OCI-LY7 (cell line): ENCODE measurements at regions of chr6 and their contacts with region 1.

Region 1: DNA sequence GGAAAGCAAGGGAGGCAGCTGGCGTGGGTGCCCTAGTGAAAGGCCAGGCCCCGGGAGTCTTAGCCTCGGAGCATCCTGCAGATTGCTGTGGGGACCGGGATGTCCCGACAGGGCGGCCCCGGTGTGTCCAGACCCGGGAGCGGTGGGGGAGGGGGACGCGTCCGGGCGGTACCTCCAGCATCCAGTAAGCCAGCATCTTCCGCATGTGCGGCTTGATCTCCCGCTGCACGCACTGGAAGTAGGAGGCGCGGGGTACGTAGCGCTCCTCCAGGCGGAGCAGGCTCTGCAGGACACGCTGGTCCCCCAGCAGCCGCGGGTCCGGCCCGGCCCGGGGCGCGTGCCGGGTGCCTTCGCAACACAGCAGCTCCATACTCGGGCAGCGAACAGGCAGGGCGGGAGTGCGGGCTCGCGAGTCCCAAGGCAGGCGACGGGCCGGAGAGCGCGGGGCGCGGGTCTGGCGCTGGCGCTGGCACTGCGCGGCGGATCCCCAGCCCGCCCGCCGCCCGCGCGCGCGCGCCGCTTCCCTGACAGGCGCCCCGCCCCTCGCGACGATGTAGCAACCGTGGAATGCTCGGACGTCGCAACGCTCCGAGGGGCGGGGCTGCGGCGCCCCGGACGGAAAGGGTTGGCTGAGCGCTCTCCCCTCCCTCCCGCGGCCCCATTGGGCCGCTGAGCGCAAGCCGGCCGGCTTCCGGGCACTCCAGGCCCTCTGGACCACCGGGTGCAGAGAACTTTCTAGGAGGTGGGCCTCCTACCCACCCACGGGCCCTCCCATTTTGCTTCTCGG is at the start of gene CCND3:
- DNase-seq: peak; percentile 95
- H3K4me3 ChIP-seq: peak within 1 kb of the TSS; percentile 93
- H3K27ac ChIP-seq: peak within 1 kb of the TSS; percentile 82
- H3K4me1 ChIP-seq: peaks cover 69% of the 10 kb centered on the region
- CTCF ChIP-seq: no peak
- total RNA-seq, gene CCND3: 229 and 319 TPM in 2 replicates

Region 2: DNA sequence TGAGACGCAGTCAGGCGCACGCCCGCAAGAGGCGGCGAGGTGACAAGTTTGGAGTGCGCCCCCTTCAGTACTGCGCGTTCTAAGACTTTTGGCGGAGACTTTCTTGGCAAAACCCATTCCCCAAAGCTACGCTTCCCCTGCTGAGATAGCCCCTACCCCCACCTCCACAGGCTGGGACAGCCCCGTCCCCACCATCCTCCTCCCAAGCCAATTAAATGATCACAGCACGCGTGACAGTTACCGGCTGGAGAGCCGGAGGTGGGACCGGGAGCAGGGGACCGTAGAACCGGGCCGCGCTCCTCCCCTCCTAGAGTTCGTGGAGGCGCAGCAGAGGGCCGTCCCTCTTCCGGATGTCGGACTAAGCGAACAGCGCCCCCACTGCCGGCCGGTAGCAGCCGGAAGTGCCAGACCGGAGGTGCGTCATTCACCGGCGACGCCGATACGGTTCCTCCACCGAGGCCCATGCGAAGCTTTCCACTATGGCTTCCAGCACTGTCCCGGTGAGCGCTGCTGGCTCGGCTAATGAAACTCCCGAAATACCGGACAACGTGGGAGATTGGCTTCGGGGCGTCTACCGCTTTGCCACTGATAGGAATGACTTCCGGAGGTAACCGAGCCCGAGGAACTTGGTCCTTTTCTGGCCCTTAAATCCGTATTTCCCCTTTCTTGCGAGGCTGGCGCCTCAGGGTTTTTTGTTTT is 154.1 kb before region 1 on chr6 and contains the start of gene TOMM6:
- CTCF ChIA-PET with region 1: interaction called, 3 read pairs
- POLR2A ChIA-PET with region 1: interaction called, 3 read pairs
- intact Hi-C with region 1: loop called (anchors 2 kb)
- DNase-seq: peak; percentile 97
- H3K4me3 ChIP-seq: peak within 1 kb of the TSS; percentile 86
- H3K27ac ChIP-seq: peak within 1 kb of the TSS; percentile 81
- H3K4me1 ChIP-seq: peaks cover 39% of the 10 kb centered on the region
- CTCF ChIP-seq: peak; percentile 81
- total RNA-seq, gene TOMM6: 84.9 and 131 TPM in 2 replicates

Region 3: DNA sequence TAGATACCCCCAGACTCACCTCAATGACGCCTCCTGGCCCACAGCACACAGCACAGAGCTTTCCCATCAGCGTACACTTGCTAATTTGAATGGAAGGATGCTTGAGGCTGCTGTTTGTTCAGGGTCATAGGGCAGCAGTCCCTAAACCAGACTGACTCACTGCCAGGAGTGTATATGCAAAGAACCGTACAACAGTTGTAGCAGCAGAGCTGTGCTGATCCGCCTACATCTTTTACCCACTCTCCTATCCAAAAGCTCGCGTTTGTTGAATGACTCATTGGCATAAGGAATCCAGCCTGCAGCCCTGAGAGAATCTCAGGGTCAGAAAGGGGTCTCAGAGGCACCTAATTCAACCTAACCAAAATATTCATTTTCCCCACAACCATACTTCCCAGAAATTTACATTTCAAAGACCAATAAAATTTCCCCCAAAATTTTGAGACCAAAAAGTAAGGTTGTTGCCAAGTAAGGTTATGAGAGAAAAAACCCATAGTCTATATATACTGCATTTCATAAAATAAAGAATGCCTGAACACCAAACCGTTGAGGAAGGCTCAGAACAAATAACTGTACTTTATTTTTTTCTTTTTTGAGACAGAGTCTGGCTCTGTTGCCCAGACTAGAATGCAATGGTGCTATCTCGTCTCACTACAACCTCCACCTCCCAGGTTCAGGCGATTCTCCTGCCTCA is 35.5 kb after region 1 on chr6:
- CTCF ChIA-PET with region 1: no interaction called
- POLR2A ChIA-PET with region 1: interaction called, 4 read pairs
- intact Hi-C with region 1: loop called (anchors 5 kb)
- DNase-seq: peak; percentile 29
- H3K4me3 ChIP-seq: no peak overlapping the region
- H3K27ac ChIP-seq: peak overlapping the region; percentile 47
- H3K4me1 ChIP-seq: peaks cover 75% of the 10 kb centered on the region
- CTCF ChIP-seq: no peak

Region 4: DNA sequence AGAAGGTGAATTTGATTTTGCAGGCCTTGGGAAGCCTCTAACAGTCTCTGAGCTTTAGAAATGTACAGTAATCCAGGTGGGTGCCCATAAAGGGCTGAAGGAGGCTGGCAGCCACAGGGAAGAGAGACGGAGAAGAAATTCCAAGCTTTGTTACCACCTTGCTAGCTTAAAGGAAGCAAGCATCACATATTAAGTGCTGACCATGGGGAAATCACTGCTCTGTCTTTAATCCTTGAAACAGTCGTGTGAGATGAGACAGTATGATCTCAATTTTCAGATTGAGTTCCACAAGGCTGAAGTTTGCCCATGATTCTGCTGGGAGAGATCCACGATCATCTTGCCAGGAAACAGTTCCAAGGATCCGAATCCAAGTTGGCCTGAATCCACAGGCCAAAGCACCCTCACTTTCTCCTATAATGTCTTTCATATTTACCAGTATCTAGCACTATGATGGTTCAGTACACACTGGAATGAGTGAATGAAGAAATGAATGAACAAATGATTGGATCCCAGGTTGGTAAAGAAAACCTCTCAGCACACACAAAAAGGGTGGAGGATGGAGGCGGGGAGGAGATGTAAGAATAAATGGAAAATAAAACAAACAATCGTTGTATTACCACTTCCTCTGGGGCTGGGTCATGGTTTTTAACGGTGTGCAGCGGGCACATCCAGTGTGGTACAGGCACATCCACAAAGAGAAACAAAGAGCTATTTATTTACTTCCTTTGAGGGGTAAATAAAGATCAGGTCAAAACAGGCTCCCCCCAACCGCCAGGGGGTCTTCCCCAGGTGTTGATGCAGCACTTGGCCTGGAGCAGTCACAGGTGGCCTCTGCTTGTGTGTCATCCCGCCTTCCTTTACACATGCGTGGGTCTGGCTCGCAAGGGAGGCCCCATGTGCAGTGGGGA is 80.6 kb after region 1 on chr6:
- CTCF ChIA-PET with region 1: interaction called, 9 read pairs
- POLR2A ChIA-PET with region 1: interaction called, 17 read pairs
- intact Hi-C with region 1: loop called (anchors 1 kb)
- DNase-seq: peak; percentile 98
- H3K4me3 ChIP-seq: peak overlapping the region; percentile 35
- H3K27ac ChIP-seq: peak overlapping the region; percentile 98
- H3K4me1 ChIP-seq: peaks cover 96% of the 10 kb centered on the region
- CTCF ChIP-seq: peak; percentile 45

Region 5: DNA sequence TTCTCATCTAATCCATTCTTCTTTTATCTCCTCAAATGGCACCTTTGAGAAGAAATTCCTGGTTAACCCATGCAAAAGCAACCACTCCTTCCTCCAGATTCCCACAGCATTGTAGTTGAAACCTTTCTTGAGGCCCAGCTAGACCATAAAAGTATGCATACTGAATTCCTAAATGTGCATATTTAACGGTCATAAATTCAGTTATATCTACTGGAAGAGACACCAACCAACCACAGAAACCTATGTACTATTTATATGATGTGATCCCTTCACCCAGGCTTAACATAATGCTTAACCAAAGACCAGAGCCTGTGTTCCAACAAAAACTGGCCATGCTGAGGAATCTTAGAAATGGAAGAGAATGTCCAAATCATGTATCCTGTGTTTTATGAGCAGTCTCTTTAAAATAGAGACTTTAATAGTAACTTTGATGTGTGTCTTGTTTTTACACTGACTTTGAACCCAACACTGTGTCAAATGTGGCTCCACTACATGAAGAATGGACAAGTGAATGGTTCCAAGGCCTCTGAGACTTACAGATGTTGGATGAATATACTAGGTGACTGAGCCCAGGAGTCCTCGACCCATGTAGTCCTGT is 97.4 kb after region 1 on chr6:
- CTCF ChIA-PET with region 1: interaction called, 11 read pairs
- POLR2A ChIA-PET with region 1: interaction called, 8 read pairs
- intact Hi-C with region 1: loop called (anchors 1 kb)
- DNase-seq: no peak
- H3K4me3 ChIP-seq: peak overlapping the region; percentile 50
- H3K27ac ChIP-seq: peak overlapping the region; percentile 84
- H3K4me1 ChIP-seq: peaks cover 65% of the 10 kb centered on the region
- CTCF ChIP-seq: no peak

Region 6: GRCh38 chr6:42387336-42387735 is 445.9 kb after region 1 on chr6:
- CTCF ChIA-PET with region 1: no interaction called
- POLR2A ChIA-PET with region 1: no interaction called
- intact Hi-C with region 1: no loop called
- DNase-seq: no peak
- H3K4me3 ChIP-seq: no peak overlapping the region
- H3K27ac ChIP-seq: no peak overlapping the region
- H3K4me1 ChIP-seq: peaks cover 15% of the 10 kb centered on the region
- CTCF ChIP-seq: no peak